WTC11 (cell line): ENCODE measurements at regions of chr12 and their contacts with region 1.

Region 1: DNA sequence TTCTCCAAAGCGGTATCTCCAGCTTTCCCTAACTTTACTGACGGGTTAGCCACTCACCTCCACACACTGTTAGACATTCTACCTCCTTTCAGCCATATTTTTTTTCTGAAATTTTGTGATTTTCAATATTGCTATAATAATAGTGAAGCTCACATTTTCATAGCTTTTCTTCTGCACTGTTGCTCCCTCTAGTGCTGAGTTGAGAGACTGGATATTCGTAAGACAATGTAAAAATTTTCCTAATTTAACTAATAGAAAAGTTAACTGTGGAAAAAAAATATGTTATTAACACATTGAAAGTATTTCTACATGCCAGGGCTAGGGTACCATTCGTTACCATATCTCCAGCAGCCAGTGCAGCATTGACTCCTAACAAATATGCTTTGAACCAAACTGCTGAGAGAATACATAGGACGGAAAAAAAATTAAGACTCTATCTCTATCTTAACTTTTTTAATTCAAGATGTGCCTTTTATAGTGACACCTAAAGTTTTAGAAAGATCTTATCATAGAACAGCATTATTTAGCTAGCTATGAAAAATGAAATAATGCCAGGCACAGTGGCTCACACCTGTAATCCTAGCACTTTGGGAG is 48.7 kb upstream of the ABCC9 start:
- DNase-seq: no peak
- ATAC-seq: no peak
- H3K4me3 Mint-ChIP-seq: no peak overlapping the region
- H3K27ac Mint-ChIP-seq: no peak overlapping the region
- H3K4me1 Mint-ChIP-seq: peaks cover 29% of the 10 kb centered on the region
- H3K27me3 Mint-ChIP-seq: no peaks in the 10 kb centered on the region
- CTCF ChIP-seq: no peak

Region 2: GRCh38 chr12:21697904-21698630 is 291.8 kb before region 1 on chr12:
- CTCF ChIA-PET with region 1: interaction called, 54 read pairs
- POLR2A ChIA-PET with region 1: interaction called, 3 read pairs
- DNase-seq: no peak
- ATAC-seq: no peak
- H3K4me3 Mint-ChIP-seq: no peak overlapping the region
- H3K27ac Mint-ChIP-seq: no peak overlapping the region
- H3K4me1 Mint-ChIP-seq: peaks cover 10% of the 10 kb centered on the region
- H3K27me3 Mint-ChIP-seq: no peaks in the 10 kb centered on the region
- CTCF ChIP-seq: no peak

Region 3: GRCh38 chr12:21940549-21941505 is 49.1 kb before region 1 on chr12 and contains the start of gene ABCC9:
- CTCF ChIA-PET with region 1: interaction called, 14 read pairs
- POLR2A ChIA-PET with region 1: no interaction called
- DNase-seq: peak; percentile 55
- ATAC-seq: peak; percentile 74
- H3K4me3 Mint-ChIP-seq: peak within 1 kb of the TSS; percentile 88
- H3K27ac Mint-ChIP-seq: no peak within 1 kb of the TSS
- H3K4me1 Mint-ChIP-seq: peaks cover 19% of the 10 kb centered on the region
- H3K27me3 Mint-ChIP-seq: peaks cover 52% of the 10 kb centered on the region
- CTCF ChIP-seq: no peak
- total RNA-seq, gene ABCC9: 0.02 to 0.09 TPM (median 0.04 TPM) in 3 replicates

Region 4: GRCh38 chr12:21962236-21962635 is 27.7 kb before region 1 on chr12:
- CTCF ChIA-PET with region 1: interaction called, 11 read pairs
- POLR2A ChIA-PET with region 1: no interaction called
- DNase-seq: no peak
- ATAC-seq: no peak
- H3K4me3 Mint-ChIP-seq: no peak overlapping the region
- H3K27ac Mint-ChIP-seq: no peak overlapping the region
- H3K4me1 Mint-ChIP-seq: no peaks in the 10 kb centered on the region
- H3K27me3 Mint-ChIP-seq: no peaks in the 10 kb centered on the region
- CTCF ChIP-seq: no peak

Region 5: DNA sequence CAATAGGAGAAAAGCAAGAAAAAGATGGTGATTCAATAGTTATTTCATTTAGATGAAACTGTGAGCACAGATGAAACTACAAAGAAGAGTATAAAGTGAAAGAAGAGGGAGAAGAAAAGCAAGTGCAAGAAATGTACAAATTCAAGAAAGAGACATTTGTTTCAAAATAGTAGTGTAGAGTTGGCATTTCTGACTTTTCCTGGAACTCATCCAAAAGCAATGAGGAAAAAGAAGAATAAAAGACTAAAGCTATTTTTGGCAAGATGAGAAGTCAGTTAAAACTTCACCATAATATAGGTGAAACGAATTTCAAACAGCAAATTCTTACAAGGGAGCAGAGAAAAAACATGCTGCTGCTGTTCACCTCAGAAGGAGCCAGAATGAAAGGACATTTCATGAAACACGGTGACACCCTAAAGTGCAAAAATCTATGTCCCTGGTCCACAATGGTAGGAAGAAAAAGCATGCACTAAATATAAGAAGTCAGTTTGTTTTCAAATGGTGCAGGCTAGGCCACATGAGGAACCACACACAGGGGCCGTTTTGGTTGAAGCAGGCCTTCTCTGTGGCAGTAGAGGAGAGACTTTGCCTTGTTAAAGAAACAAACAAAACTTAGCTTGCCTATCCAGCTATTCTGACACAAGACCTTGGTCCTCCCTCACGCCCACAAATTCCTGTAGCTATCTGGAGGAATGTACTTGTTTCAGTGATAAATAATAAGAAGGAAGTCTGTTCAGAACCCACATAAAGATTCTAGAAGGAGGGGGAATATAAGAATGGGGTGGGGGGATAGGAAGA is 45.0 kb after region 1 on chr12:
- CTCF ChIA-PET with region 1: no interaction called
- POLR2A ChIA-PET with region 1: no interaction called
- DNase-seq: no peak
- ATAC-seq: no peak
- H3K4me3 Mint-ChIP-seq: no peak overlapping the region
- H3K27ac Mint-ChIP-seq: no peak overlapping the region
- H3K4me1 Mint-ChIP-seq: 0 out of 2 replicates have a peak, but pooled peaks cover 4% of the 10 kb centered on the region
- H3K27me3 Mint-ChIP-seq: no peaks in the 10 kb centered on the region; the same call in 1 of the 2 replicates
- CTCF ChIP-seq: no peak